PC-3 (cell line): ENCODE measurements at regions of chr5 and their contacts with region 1.

Region 1: GRCh38 chr5:87267574-87268125 is at the start of gene RASA1:
- DNase-seq: peak; percentile 98
- ATAC-seq: peak; percentile 71
- H3K4me3 ChIP-seq: peak within 1 kb of the TSS; percentile 95
- H3K27ac ChIP-seq: peak within 1 kb of the TSS; percentile 79
- H3K4me1 ChIP-seq: peaks cover 14% of the 10 kb centered on the region; the same call in 1 of the 2 replicates
- H3K27me3 ChIP-seq: no peaks in the 10 kb centered on the region
- CTCF ChIP-seq: no peak
- total RNA-seq, gene RASA1: 37.3 and 40.1 TPM in 2 replicates

Region 2: GRCh38 chr5:87048156-87048555 is 219.5 kb before region 1 on chr5:
- CTCF ChIA-PET with region 1: no interaction called
- POLR2A ChIA-PET with region 1: interaction called, 22 read pairs
- intact Hi-C with region 1: no loop called
- DNase-seq: peak; percentile 54
- ATAC-seq: 0 out of 2 replicates have a peak, but pooled peaks have one; percentile 29
- H3K4me3 ChIP-seq: no peak overlapping the region
- H3K27ac ChIP-seq: no peak overlapping the region
- H3K4me1 ChIP-seq: no peaks in the 10 kb centered on the region
- H3K27me3 ChIP-seq: no peaks in the 10 kb centered on the region
- CTCF ChIP-seq: peak; percentile 45

Region 3: GRCh38 chr5:87121304-87122150 is 146.1 kb before region 1 on chr5:
- CTCF ChIA-PET with region 1: no interaction called
- POLR2A ChIA-PET with region 1: interaction called, 37 read pairs
- intact Hi-C with region 1: loop called (anchors 2 kb)
- DNase-seq: peak; percentile 96
- ATAC-seq: peak; percentile 80
- H3K4me3 ChIP-seq: peak overlapping the region; percentile 38; the same call in 1 of the 2 replicates
- H3K27ac ChIP-seq: peak overlapping the region; percentile 71
- H3K4me1 ChIP-seq: peaks cover 57% of the 10 kb centered on the region
- H3K27me3 ChIP-seq: no peaks in the 10 kb centered on the region
- CTCF ChIP-seq: no peak

Region 4: GRCh38 chr5:87169300-87169991 is 98.2 kb before region 1 on chr5:
- CTCF ChIA-PET with region 1: no interaction called
- POLR2A ChIA-PET with region 1: interaction called, 3 read pairs
- intact Hi-C with region 1: loop called (anchors 1 kb)
- DNase-seq: peak; percentile 82
- ATAC-seq: peak; percentile 92
- H3K4me3 ChIP-seq: peak overlapping the region; percentile 51
- H3K27ac ChIP-seq: peak overlapping the region; percentile 86
- H3K4me1 ChIP-seq: peaks cover 23% of the 10 kb centered on the region
- H3K27me3 ChIP-seq: no peaks in the 10 kb centered on the region
- CTCF ChIP-seq: no peak

Region 5: DNA sequence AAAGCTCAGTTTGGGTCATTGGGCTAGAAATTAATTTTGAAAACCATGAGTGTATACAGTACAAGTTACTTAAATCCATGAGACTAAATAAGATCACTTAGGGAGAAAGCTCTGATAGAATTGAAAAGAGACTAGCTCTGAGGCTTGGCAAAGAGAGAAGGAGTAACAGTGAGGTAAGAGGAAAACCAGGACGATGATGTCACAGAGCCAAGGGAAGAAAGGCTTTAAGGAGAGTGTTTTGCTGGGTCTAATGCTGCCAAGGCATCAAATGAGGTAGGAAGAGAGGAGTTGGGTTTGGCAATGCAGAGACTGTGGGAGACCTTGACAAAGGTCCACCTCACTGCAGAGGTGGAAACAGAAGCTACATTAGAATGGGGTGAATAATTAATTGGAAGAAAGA is 39.4 kb before region 1 on chr5:
- CTCF ChIA-PET with region 1: no interaction called
- POLR2A ChIA-PET with region 1: interaction called, 10 read pairs
- intact Hi-C with region 1: no loop called
- DNase-seq: no peak
- ATAC-seq: no peak
- H3K4me3 ChIP-seq: no peak overlapping the region
- H3K27ac ChIP-seq: no peak overlapping the region
- H3K4me1 ChIP-seq: peaks cover 8% of the 10 kb centered on the region; the same call in 1 of the 2 replicates
- H3K27me3 ChIP-seq: no peaks in the 10 kb centered on the region
- CTCF ChIP-seq: no peak

Region 6: DNA sequence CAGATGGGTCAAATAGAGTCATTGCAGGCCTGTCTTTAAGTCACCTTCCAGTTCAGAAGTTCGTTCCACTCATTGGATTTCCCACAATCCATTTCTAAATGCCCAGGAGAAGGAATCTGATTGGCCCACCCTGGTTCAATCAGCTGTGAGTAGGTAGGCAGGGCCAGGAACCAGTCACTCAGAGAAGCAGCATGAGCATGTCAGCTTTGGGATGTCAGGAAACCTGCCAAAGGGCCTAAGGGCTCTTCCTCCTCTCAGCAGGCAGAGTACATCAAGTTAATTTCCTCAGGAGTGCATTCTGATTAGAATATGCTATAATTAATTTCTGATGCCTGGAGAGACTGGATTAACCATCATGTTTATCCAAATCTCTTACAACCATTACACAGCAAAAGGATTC is 557.9 kb after region 1 on chr5:
- CTCF ChIA-PET with region 1: no interaction called
- POLR2A ChIA-PET with region 1: no interaction called
- intact Hi-C with region 1: no loop called
- DNase-seq: peak; percentile 27
- ATAC-seq: no peak
- H3K4me3 ChIP-seq: no peak overlapping the region
- H3K27ac ChIP-seq: no peak overlapping the region
- H3K4me1 ChIP-seq: peaks cover 8% of the 10 kb centered on the region; the same call in 1 of the 2 replicates
- H3K27me3 ChIP-seq: no peaks in the 10 kb centered on the region
- CTCF ChIP-seq: no peak

Region 7: DNA sequence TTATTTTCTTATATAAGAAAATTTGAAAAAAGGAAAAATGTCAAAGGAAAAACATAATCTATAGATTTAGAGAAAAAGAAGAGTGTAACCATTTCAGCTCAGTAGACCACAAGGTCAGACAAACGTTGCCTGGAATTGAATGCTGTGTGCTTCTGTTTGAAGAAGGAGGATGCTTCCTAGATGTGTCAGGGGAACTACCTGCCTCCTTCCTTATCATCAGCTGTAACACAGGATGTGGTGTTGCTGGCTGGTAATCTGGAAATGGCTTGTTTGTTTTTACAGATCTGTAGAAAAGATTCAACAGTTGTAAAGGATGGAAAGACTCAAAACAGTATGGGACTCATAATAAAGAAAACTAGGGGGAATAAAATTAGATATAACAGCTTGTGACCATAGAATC is 1776.0 kb after region 1 on chr5:
- CTCF ChIA-PET with region 1: no interaction called
- POLR2A ChIA-PET with region 1: interaction called, 18 read pairs
- intact Hi-C with region 1: no loop called
- DNase-seq: peak; percentile 89
- ATAC-seq: peak; percentile 97
- H3K4me3 ChIP-seq: no peak overlapping the region
- H3K27ac ChIP-seq: peak overlapping the region; percentile 33; the same call in 1 of the 2 replicates
- H3K4me1 ChIP-seq: peaks cover 23% of the 10 kb centered on the region
- H3K27me3 ChIP-seq: no peaks in the 10 kb centered on the region
- CTCF ChIP-seq: no peak